ENCODE measurements at regions of chr20 and their contacts with region 1.

Region 1: GRCh38 chr20:64255361-64256281 is at the start of gene PCMTD2:
- DNase-seq: peak; percentile 89
- ATAC-seq: peak; percentile 96
- total RNA-seq, gene PCMTD2: 54.9 to 76.4 TPM

Region 2: DNA sequence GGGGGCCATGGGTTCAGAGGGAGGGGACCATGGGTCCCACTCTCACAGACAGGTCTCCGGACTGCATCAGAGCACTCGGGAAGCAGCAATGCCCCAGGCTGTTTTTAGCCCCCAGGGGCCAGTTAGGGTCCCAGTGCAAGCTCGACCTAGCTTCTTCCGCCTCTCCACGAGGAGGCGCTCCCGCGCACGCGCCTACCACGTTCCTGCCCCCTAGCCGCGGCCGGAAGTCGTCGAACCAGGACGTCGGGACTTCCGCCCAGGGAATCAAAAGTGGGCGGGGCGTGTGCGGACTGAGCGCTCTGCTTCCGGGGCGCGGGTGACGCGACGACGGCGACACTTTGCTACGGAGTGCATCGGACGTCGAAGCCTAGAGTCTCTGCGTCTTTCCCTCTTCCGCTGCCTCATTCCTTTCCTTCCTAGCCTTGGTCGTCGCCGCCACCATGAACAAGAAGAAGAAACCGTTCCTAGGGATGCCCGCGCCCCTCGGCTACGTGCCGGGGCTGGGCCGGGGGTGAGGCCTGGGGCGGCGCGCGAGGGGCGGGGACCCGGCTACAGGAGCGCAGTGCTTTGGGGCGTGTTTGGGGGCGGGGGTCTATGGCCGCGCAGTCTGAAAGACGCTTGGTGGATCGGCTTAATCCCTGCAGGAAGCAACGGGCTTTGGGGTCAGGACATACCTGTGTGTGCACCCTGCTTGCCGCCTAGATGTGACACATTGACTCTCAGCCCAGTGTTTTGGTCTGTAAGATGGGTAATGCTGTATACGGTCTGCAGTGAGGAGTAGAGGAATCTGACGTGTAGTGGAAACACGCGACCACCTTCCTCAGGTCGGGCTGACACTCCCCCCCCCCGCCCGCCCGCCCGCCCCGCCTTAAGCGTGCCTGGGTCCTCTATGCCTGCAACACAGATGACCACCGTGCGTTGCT is 274.6 kb before region 1 on chr20 and contains the start of gene PRPF6:
- intact Hi-C with region 1: no loop called
- DNase-seq: peak; percentile 96
- ATAC-seq: peak; percentile 91 to 92
- total RNA-seq, gene PRPF6: 38.8 to 43.9 TPM

Region 3: DNA sequence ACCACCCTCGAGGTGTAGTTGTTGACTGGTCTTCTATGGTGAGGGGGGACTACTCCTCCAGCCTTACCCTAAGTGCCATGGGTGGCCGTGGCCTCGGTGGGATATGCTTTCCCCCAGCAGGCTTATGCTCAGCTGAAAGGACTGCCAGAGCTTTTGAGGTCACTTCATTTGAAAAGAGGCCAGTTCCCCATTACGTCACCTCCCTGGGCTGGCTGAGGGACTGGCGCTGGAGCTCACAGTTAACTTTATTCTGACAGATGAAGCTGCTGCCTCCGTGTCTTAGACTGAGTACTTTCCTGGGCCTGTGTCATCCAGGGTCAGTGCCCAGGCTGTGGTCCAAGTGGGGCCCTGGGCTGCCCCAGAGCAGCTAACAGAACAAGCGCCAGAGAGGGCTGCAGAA is 42.9 kb before region 1 on chr20:
- intact Hi-C with region 1: loop called in 1 of 2 experiments (anchors 5 kb)
- DNase-seq: peak; percentile 65
- ATAC-seq: peak; percentile 82 to 91

Measured in left cardiac atrium (tissue), 4 donors.